ENCODE measurements at regions of chr11 and their contacts with region 1.

Region 1: GRCh38 chr11:119095066-119095880 is 6.4 kb downstream of the DPAGT1 start:
- DNase-seq: peak; percentile 98 to 100 (median 99)
- ATAC-seq: peak; percentile 88
- H3K4me3 ChIP-seq: peak overlapping the region; percentile 86
- H3K4me3 Mint-ChIP-seq: peak overlapping the region; percentile 79
- H3K27ac ChIP-seq: peak overlapping the region; percentile 61 to 62
- H3K27ac Mint-ChIP-seq: peak overlapping the region; percentile 68
- H3K4me1 ChIP-seq: peaks cover 42% of the 10 kb centered on the region
- H3K4me1 Mint-ChIP-seq: peaks cover 37% of the 10 kb centered on the region
- H3K27me3 ChIP-seq: no peaks in the 10 kb centered on the region
- H3K27me3 Mint-ChIP-seq: no peaks in the 10 kb centered on the region
- CTCF ChIP-seq: peak; percentile 29

Region 2: DNA sequence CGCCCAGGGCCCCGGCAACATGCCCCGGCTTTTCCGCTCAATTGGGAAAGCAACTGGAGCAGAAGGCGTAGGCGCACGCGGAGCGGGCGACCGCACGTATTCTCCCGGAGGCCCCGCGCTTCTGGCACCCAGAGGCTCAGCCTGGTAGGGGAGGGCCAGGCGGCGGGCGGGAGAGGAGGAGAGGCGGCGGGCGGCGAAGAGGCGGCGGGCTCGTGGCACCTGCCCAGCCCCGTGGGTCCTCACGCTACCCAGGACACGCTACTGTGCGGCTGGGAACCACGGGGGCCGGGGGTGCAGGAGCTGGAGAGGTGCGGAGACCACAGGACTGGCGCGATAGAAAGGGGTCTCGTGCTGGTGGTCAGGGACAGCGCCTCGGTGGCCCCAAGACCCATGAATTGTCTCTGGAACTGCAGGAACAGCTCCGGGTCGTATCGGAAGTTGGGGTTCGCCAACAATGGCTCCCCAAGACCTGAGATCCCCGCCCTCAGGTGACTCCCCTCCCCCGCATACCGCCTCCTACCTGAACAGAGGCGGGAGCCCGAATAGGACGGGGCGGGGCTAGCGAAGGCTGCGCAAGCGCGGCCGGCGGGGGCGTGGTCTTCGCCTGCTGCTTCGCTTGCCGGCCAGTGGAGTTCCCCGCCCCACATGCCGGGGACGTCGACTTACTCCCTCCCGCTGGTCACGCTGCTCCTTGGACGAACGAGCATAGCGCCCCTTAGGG is 64.8 kb before region 1 on chr11 and contains the start of gene SLC37A4:
- CTCF ChIA-PET with region 1: interaction called, 3 read pairs
- POLR2A ChIA-PET with region 1: interaction called, 10 read pairs
- intact Hi-C with region 1: loop called in 1 of 2 experiments (anchors 2 kb)
- DNase-seq: peak; percentile 96 to 100 (median 99)
- ATAC-seq: peak; percentile 95
- H3K4me3 ChIP-seq: peak within 1 kb of the TSS; percentile 91
- H3K4me3 Mint-ChIP-seq: peak within 1 kb of the TSS; percentile 96
- H3K27ac ChIP-seq: peak within 1 kb of the TSS; percentile 73 to 74
- H3K27ac Mint-ChIP-seq: peak within 1 kb of the TSS; percentile 92
- H3K4me1 ChIP-seq: peaks cover 29% of the 10 kb centered on the region
- H3K4me1 Mint-ChIP-seq: peaks cover 22% of the 10 kb centered on the region
- H3K27me3 ChIP-seq: no peaks in the 10 kb centered on the region
- H3K27me3 Mint-ChIP-seq: no peaks in the 10 kb centered on the region
- CTCF ChIP-seq: peak; percentile 75
- total RNA-seq, gene SLC37A4: 5.2 to 6.6 TPM

Region 3: GRCh38 chr11:119084663-119085436 is 10.4 kb before region 1 on chr11 and contains the start of gene HMBS:
- CTCF ChIA-PET with region 1: interaction called, 8 read pairs
- POLR2A ChIA-PET with region 1: interaction called, 60 read pairs
- intact Hi-C with region 1: loop called in 1 of 2 experiments (anchors 1 kb)
- DNase-seq: peak; percentile 70 to 96 (median 88)
- ATAC-seq: peak; percentile 94
- H3K4me3 ChIP-seq: peak within 1 kb of the TSS; percentile 79
- H3K4me3 Mint-ChIP-seq: peak within 1 kb of the TSS; percentile 92
- H3K27ac ChIP-seq: peak within 1 kb of the TSS; percentile 74 to 81
- H3K27ac Mint-ChIP-seq: peak within 1 kb of the TSS; percentile 88
- H3K4me1 ChIP-seq: peaks cover 26% of the 10 kb centered on the region
- H3K4me1 Mint-ChIP-seq: peaks cover 25% of the 10 kb centered on the region
- H3K27me3 ChIP-seq: no peaks in the 10 kb centered on the region
- H3K27me3 Mint-ChIP-seq: no peaks in the 10 kb centered on the region
- CTCF ChIP-seq: no peak
- total RNA-seq, gene HMBS: 3.4 to 4.1 TPM

Region 4: DNA sequence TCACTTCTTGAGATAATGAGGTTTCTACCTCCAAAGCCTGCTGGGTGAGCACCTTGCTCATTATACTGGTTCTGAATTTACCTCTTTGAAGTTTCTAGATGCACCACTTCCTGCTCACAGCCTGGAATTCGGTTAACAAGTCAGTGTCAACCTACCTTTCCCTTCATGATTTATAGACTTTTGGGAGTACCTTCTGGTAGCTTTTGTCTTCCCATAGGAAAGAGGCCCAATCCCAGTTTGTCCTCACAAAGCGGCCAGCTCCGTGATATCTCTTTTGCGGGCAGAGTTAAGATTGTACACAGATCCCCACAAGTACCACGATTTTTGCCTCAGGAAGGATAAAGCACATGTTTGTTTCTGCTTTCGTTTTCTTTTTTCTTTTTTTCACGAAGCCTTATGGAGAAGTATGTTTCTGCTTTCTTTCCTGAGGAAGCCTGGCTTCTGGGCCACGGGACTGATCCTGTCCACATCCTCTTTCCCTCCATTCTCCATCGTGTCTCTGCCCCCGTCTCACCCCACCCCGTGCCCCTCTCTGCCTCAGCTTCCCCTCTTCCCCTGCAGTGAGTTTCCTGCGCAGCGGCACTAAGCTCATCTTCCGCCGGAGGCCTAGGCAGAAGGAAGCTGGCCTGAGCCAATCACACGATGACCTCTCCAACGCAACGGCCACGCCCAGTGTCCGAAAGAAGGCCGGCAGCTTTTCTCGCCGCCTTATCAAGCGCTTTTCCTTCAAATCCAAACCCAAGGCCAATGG is 20.4 kb after region 1 on chr11:
- CTCF ChIA-PET with region 1: interaction called, 3 read pairs
- POLR2A ChIA-PET with region 1: interaction called, 45 read pairs
- intact Hi-C with region 1: loop called in 1 of 2 experiments (anchors 2 kb)
- DNase-seq: peak in 6 of 14 experiments; percentile 15 to 73 (median 56)
- ATAC-seq: peak; percentile 94
- H3K4me3 ChIP-seq: peak overlapping the region; percentile 48
- H3K4me3 Mint-ChIP-seq: peak overlapping the region; percentile 71
- H3K27ac ChIP-seq: peak overlapping the region; percentile 59 to 80
- H3K27ac Mint-ChIP-seq: peak overlapping the region; percentile 86
- H3K4me1 ChIP-seq: peaks cover 42% of the 10 kb centered on the region
- H3K4me1 Mint-ChIP-seq: peaks cover 30% of the 10 kb centered on the region
- H3K27me3 ChIP-seq: no peaks in the 10 kb centered on the region
- H3K27me3 Mint-ChIP-seq: no peaks in the 10 kb centered on the region
- CTCF ChIP-seq: no peak

Region 5: GRCh38 chr11:119196833-119197483 is 101.7 kb after region 1 on chr11:
- CTCF ChIA-PET with region 1: interaction called, 3 read pairs
- POLR2A ChIA-PET with region 1: interaction called, 8 read pairs
- intact Hi-C with region 1: loop called (anchors 2 to 10 kb)
- DNase-seq: peak; percentile 36 to 90 (median 64)
- ATAC-seq: peak; percentile 99
- H3K4me3 ChIP-seq: no peak overlapping the region
- H3K4me3 Mint-ChIP-seq: no peak overlapping the region
- H3K27ac ChIP-seq: no peak overlapping the region
- H3K27ac Mint-ChIP-seq: no peak overlapping the region
- H3K4me1 ChIP-seq: no peaks in the 10 kb centered on the region
- H3K4me1 Mint-ChIP-seq: peaks cover 5% of the 10 kb centered on the region
- H3K27me3 ChIP-seq: no peaks in the 10 kb centered on the region
- H3K27me3 Mint-ChIP-seq: no peaks in the 10 kb centered on the region
- CTCF ChIP-seq: peak; percentile 85

Measured in CD4-positive, alpha-beta T cell (primary cell).